ENCODE measurements at regions of chr15 and their contacts with region 1.

Region 1: GRCh38 chr15:26891448-26892181 is 24.8 kb downstream of the GABRA5 start:
- DNase-seq: peak; percentile 65
- H3K4me3 Mint-ChIP-seq: no peak overlapping the region
- H3K27ac Mint-ChIP-seq: no peak overlapping the region
- H3K4me1 Mint-ChIP-seq: no peaks in the 10 kb centered on the region
- H3K27me3 Mint-ChIP-seq: peaks cover 9% of the 10 kb centered on the region

Region 2: GRCh38 chr15:26759986-26760385 is 131.6 kb before region 1 on chr15:
- CTCF ChIA-PET with region 1: no interaction called
- POLR2A ChIA-PET with region 1: no interaction called
- intact Hi-C with region 1: no loop called
- DNase-seq: no peak
- H3K4me3 Mint-ChIP-seq: no peak overlapping the region
- H3K27ac Mint-ChIP-seq: no peak overlapping the region
- H3K4me1 Mint-ChIP-seq: no peaks in the 10 kb centered on the region
- H3K27me3 Mint-ChIP-seq: no peaks in the 10 kb centered on the region

Region 3: GRCh38 chr15:27017168-27017809 is 125.7 kb after region 1 on chr15:
- CTCF ChIA-PET with region 1: interaction called, 4 read pairs
- POLR2A ChIA-PET with region 1: no interaction called
- intact Hi-C with region 1: loop called (anchors 2 kb)
- DNase-seq: peak; percentile 37
- H3K4me3 Mint-ChIP-seq: no peak overlapping the region
- H3K27ac Mint-ChIP-seq: no peak overlapping the region
- H3K4me1 Mint-ChIP-seq: no peaks in the 10 kb centered on the region
- H3K27me3 Mint-ChIP-seq: no peaks in the 10 kb centered on the region

Region 4: GRCh38 chr15:27358751-27359434 is 467.3 kb after region 1 on chr15:
- CTCF ChIA-PET with region 1: interaction called, 3 read pairs
- POLR2A ChIA-PET with region 1: no interaction called
- intact Hi-C with region 1: loop called (anchors 5 kb)
- DNase-seq: peak; percentile 12
- H3K4me3 Mint-ChIP-seq: no peak overlapping the region
- H3K27ac Mint-ChIP-seq: no peak overlapping the region
- H3K4me1 Mint-ChIP-seq: no peaks in the 10 kb centered on the region
- H3K27me3 Mint-ChIP-seq: no peaks in the 10 kb centered on the region

Region 5: DNA sequence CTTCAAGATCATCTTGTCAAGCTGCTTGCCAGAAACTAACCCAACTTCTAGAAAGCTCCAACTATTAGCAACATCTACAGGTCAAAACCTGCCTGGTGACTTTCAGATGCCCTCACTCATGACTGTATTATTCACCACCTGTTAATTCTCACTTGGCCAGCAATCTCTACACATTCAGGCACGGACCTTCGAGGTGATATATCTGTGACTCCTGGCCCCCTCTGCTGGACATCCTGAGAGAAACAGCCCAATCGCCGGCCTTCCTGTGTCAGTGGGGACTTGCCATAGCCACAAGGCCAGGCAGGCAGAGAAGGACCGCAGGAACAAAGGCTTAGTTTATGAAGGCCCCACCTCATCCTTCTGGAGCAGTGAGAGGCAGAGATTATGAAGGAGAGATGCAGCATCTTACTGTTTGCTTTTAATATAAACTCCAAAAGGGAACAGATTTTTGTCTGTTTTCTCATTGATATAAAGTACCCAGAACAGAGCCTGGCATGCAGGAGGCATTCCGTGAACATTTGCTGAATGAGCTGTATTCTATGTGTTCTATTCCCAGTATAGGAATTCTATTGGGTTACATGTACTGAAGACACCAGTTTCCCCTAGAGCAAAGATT is 1231.9 kb after region 1 on chr15:
- CTCF ChIA-PET with region 1: no interaction called
- POLR2A ChIA-PET with region 1: no interaction called
- intact Hi-C with region 1: loop called (anchors 5 kb)
- DNase-seq: peak; percentile 61
- H3K4me3 Mint-ChIP-seq: no peak overlapping the region
- H3K27ac Mint-ChIP-seq: no peak overlapping the region
- H3K4me1 Mint-ChIP-seq: no peaks in the 10 kb centered on the region
- H3K27me3 Mint-ChIP-seq: no peaks in the 10 kb centered on the region

Measured in activated CD4-positive, alpha-beta memory T cell treated with anti-CD3 and anti-CD28 coated beads for 36 hours (primary cell).